CD8-positive, alpha-beta T cell (primary cell): ENCODE measurements at regions of chr6 and their contacts with region 1.

Region 1: DNA sequence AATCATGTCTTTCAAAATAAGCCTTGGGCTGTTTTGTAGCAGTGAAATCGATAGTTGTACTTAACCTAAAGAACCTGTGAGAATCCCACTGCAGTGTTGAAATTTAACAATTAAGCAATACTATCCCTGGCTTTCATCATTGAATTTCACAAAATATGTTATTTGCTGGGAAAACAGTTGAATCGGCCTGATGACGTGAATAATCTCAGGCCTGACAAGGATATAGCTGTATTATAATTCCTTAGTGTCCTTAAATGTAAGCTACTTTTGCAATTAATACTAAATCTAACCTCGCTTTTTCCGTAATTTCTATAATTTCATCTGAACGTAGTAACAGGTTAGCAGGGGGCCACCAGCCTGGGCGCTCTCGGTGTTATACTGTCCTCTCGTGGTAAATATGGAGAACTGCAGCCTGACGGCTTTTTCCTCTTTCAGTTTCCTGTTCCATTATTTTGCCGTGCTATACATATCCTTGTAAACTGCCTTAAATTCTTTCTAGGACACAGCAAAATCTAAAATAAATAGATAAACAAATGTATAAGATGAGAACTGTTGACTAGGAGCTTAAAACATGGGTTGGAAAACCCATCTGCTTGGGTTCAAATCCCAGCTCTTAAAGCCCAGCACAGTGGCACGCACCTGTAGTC is 24.0 kb downstream of the MTFR2 start:
- DNase-seq: peak; percentile 19 to 75 (median 60)
- ATAC-seq: peak; percentile 95
- H3K4me3 ChIP-seq: peak overlapping the region in 1 of 2 experiments; percentile 21
- H3K4me3 Mint-ChIP-seq: peak overlapping the region; percentile 56
- H3K27ac ChIP-seq: no peak overlapping the region
- H3K27ac Mint-ChIP-seq: no peak overlapping the region
- H3K4me1 ChIP-seq: no peaks in the 10 kb centered on the region
- H3K4me1 Mint-ChIP-seq: peaks cover 3% of the 10 kb centered on the region
- H3K27me3 ChIP-seq: no peaks in the 10 kb centered on the region
- H3K27me3 Mint-ChIP-seq: no peaks in the 10 kb centered on the region
- CTCF ChIP-seq: peak; percentile 100

Region 2: GRCh38 chr6:134358320-134358719 is 1867.8 kb before region 1 on chr6:
- CTCF ChIA-PET with region 1: no interaction called
- POLR2A ChIA-PET with region 1: no interaction called
- intact Hi-C with region 1: loop called in 1 of 2 experiments (anchors 5 kb)
- DNase-seq: no peak
- ATAC-seq: no peak
- H3K4me3 ChIP-seq: no peak overlapping the region
- H3K4me3 Mint-ChIP-seq: no peak overlapping the region
- H3K27ac ChIP-seq: no peak overlapping the region
- H3K27ac Mint-ChIP-seq: no peak overlapping the region
- H3K4me1 ChIP-seq: no peaks in the 10 kb centered on the region
- H3K4me1 Mint-ChIP-seq: peaks cover under 1% of the 10 kb centered on the region
- H3K27me3 ChIP-seq: no peaks in the 10 kb centered on the region
- H3K27me3 Mint-ChIP-seq: no peaks in the 10 kb centered on the region
- CTCF ChIP-seq: no peak

Region 3: DNA sequence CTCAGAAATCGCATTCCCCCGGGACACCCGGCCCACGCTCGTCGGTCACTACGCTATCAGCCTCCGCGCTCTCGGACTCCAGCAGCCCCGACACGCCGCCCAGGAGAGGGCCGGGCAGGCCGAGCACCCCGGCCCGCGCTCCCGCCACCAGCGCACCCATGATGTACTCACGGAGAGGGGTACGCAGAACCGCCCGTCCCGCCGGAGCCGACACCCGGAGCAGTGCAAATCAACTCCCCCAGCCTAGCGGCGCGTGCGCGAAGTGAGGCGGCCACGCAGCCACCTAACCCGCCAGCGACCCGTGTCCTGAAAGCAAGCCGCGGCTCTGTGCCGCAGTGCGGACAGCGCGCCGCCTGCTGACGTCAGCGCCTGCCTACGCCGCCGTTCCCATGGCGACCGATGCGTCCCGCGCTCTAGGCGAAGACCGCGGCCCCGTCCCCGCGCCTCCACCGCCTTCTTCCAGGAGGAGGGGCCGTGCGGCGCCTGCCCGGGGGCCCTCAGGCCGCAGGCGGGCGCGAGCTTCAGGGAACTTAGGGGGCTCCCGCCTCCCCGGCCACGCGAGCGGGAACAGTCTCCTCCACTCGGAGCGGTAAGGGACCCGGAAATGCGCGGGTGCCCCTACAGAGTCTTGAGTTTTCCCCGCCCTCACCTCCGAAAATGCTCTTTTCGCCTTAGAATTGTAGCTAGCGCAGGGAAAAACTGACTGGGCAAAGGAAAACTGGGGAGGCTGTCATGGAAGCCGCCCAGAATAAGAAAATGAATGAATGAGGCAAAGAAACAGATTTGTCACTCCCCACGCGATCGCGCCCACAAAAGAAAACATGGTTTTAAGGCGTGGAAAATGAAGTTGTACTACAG is 728.5 kb before region 1 on chr6 and contains the start of gene AHI1:
- CTCF ChIA-PET with region 1: interaction called, 13 read pairs
- POLR2A ChIA-PET with region 1: no interaction called
- intact Hi-C with region 1: no loop called
- DNase-seq: peak; percentile 81 to 95 (median 86)
- ATAC-seq: peak; percentile 72
- H3K4me3 ChIP-seq: peak within 1 kb of the TSS; percentile 87 to 95
- H3K4me3 Mint-ChIP-seq: no peak within 1 kb of the TSS
- H3K27ac ChIP-seq: peak within 1 kb of the TSS; percentile 91 to 98
- H3K27ac Mint-ChIP-seq: no peak within 1 kb of the TSS
- H3K4me1 ChIP-seq: peaks cover 6% of the 10 kb centered on the region
- H3K4me1 Mint-ChIP-seq: peaks cover 8% of the 10 kb centered on the region
- H3K27me3 ChIP-seq: no peaks in the 10 kb centered on the region
- H3K27me3 Mint-ChIP-seq: no peaks in the 10 kb centered on the region
- CTCF ChIP-seq: no peak
- total RNA-seq, gene AHI1: 16.0 to 17.9 TPM

Region 4: GRCh38 chr6:135535989-135536414 is 690.1 kb before region 1 on chr6:
- CTCF ChIA-PET with region 1: interaction called, 25 read pairs
- POLR2A ChIA-PET with region 1: no interaction called
- intact Hi-C with region 1: loop called (anchors 1 kb)
- DNase-seq: peak in 2 of 9 experiments; percentile 52 to 62
- ATAC-seq: peak; percentile 46
- H3K4me3 ChIP-seq: no peak overlapping the region
- H3K4me3 Mint-ChIP-seq: peak overlapping the region; percentile 67
- H3K27ac ChIP-seq: no peak overlapping the region
- H3K27ac Mint-ChIP-seq: no peak overlapping the region
- H3K4me1 ChIP-seq: no peaks in the 10 kb centered on the region
- H3K4me1 Mint-ChIP-seq: peaks cover 10% of the 10 kb centered on the region
- H3K27me3 ChIP-seq: no peaks in the 10 kb centered on the region
- H3K27me3 Mint-ChIP-seq: peaks cover 2% of the 10 kb centered on the region
- CTCF ChIP-seq: peak; percentile 76

Region 5: GRCh38 chr6:135870722-135871121 is 355.4 kb before region 1 on chr6:
- CTCF ChIA-PET with region 1: no interaction called
- POLR2A ChIA-PET with region 1: no interaction called
- intact Hi-C with region 1: no loop called
- DNase-seq: no peak
- ATAC-seq: no peak
- H3K4me3 ChIP-seq: no peak overlapping the region
- H3K4me3 Mint-ChIP-seq: no peak overlapping the region
- H3K27ac ChIP-seq: no peak overlapping the region
- H3K27ac Mint-ChIP-seq: no peak overlapping the region
- H3K4me1 ChIP-seq: peaks cover 2% of the 10 kb centered on the region
- H3K4me1 Mint-ChIP-seq: peaks cover 4% of the 10 kb centered on the region
- H3K27me3 ChIP-seq: no peaks in the 10 kb centered on the region
- H3K27me3 Mint-ChIP-seq: no peaks in the 10 kb centered on the region
- CTCF ChIP-seq: no peak

Region 6: DNA sequence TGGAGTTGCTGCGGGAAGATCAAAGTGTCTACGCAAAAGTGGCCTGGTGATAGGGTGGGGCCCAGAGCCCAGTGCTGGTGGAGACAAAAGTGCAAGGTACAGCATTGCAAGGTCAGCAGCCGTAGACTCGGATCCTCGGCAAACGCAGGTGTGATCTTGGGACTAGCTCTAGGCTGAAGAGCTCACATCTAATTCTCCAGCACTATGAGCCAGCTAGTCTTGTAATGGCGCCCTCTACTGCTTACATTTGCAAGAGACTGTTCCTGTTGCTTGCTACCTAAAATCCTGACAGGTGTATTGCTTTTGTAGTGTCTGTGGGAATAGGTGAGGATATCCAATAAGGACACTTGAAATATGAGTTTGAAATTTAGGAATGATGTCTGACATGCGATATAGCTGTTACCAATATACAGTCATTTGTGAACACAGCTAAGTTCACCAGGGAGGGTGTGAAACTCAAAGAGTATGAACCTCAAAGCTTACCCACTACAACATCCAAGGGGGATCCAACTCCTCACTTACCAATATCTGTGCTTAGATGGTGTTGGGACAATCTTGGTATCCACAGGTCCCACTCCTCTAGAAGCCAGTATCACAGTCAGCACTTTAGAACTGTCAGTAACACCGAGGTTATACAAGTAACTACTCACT is 316.3 kb before region 1 on chr6:
- CTCF ChIA-PET with region 1: interaction called, 21 read pairs
- POLR2A ChIA-PET with region 1: no interaction called
- intact Hi-C with region 1: loop called (anchors 1 to 2 kb)
- DNase-seq: peak; percentile 12 to 84 (median 59)
- ATAC-seq: peak; percentile 92
- H3K4me3 ChIP-seq: no peak overlapping the region
- H3K4me3 Mint-ChIP-seq: no peak overlapping the region
- H3K27ac ChIP-seq: no peak overlapping the region
- H3K27ac Mint-ChIP-seq: no peak overlapping the region
- H3K4me1 ChIP-seq: no peaks in the 10 kb centered on the region
- H3K4me1 Mint-ChIP-seq: peaks cover 4% of the 10 kb centered on the region
- H3K27me3 ChIP-seq: no peaks in the 10 kb centered on the region
- H3K27me3 Mint-ChIP-seq: no peaks in the 10 kb centered on the region
- CTCF ChIP-seq: peak; percentile 68

Region 7: GRCh38 chr6:136103763-136104311 is 122.3 kb before region 1 on chr6:
- CTCF ChIA-PET with region 1: no interaction called
- POLR2A ChIA-PET with region 1: no interaction called
- intact Hi-C with region 1: no loop called
- DNase-seq: no peak
- ATAC-seq: no peak
- H3K4me3 ChIP-seq: no peak overlapping the region
- H3K4me3 Mint-ChIP-seq: no peak overlapping the region
- H3K27ac ChIP-seq: no peak overlapping the region
- H3K27ac Mint-ChIP-seq: no peak overlapping the region
- H3K4me1 ChIP-seq: no peaks in the 10 kb centered on the region
- H3K4me1 Mint-ChIP-seq: no peaks in the 10 kb centered on the region
- H3K27me3 ChIP-seq: no peaks in the 10 kb centered on the region
- H3K27me3 Mint-ChIP-seq: no peaks in the 10 kb centered on the region
- CTCF ChIP-seq: no peak

Region 8: GRCh38 chr6:136236466-136237293 is 10.5 kb after region 1 on chr6:
- CTCF ChIA-PET with region 1: interaction called, 20 read pairs
- POLR2A ChIA-PET with region 1: no interaction called
- intact Hi-C with region 1: no loop called
- DNase-seq: no peak
- ATAC-seq: no peak
- H3K4me3 ChIP-seq: no peak overlapping the region
- H3K4me3 Mint-ChIP-seq: no peak overlapping the region
- H3K27ac ChIP-seq: no peak overlapping the region
- H3K27ac Mint-ChIP-seq: no peak overlapping the region
- H3K4me1 ChIP-seq: no peaks in the 10 kb centered on the region
- H3K4me1 Mint-ChIP-seq: peaks cover 9% of the 10 kb centered on the region
- H3K27me3 ChIP-seq: no peaks in the 10 kb centered on the region
- H3K27me3 Mint-ChIP-seq: no peaks in the 10 kb centered on the region
- CTCF ChIP-seq: no peak

Region 9: GRCh38 chr6:136317021-136317694 is 91.0 kb after region 1 on chr6:
- CTCF ChIA-PET with region 1: interaction called, 18 read pairs
- POLR2A ChIA-PET with region 1: no interaction called
- intact Hi-C with region 1: loop called in 1 of 2 experiments (anchors 1 kb)
- DNase-seq: peak; percentile 34 to 84 (median 66)
- ATAC-seq: peak; percentile 97
- H3K4me3 ChIP-seq: no peak overlapping the region
- H3K4me3 Mint-ChIP-seq: no peak overlapping the region
- H3K27ac ChIP-seq: no peak overlapping the region
- H3K27ac Mint-ChIP-seq: no peak overlapping the region
- H3K4me1 ChIP-seq: no peaks in the 10 kb centered on the region
- H3K4me1 Mint-ChIP-seq: no peaks in the 10 kb centered on the region
- H3K27me3 ChIP-seq: peaks cover 0 to 3% of the 10 kb centered on the region in 2 experiments
- H3K27me3 Mint-ChIP-seq: peaks cover 2% of the 10 kb centered on the region
- CTCF ChIP-seq: peak; percentile 93